ENCODE measurements at regions of chr14 and their contacts with region 1.

Region 1: GRCh38 chr14:20613094-20614037 is 22.2 kb upstream of the RNASE12 start:
- DNase-seq: peak; percentile 91 to 96
- H3K4me3 ChIP-seq: peak overlapping the region; percentile 66
- H3K4me3 Mint-ChIP-seq: no peak overlapping the region
- H3K27ac Mint-ChIP-seq: no peak overlapping the region
- H3K4me1 ChIP-seq: 0 out of 2 replicates have a peak, but pooled peaks cover 4% of the 10 kb centered on the region
- H3K4me1 Mint-ChIP-seq: peaks cover 22% of the 10 kb centered on the region
- H3K27me3 ChIP-seq: no peaks in the 10 kb centered on the region
- H3K27me3 Mint-ChIP-seq: no peaks in the 10 kb centered on the region
- CTCF ChIP-seq: peak; percentile 64 to 83

Region 2: GRCh38 chr14:20327005-20327869 is 286.1 kb before region 1 on chr14:
- CTCF ChIA-PET with region 1: no interaction called
- POLR2A ChIA-PET with region 1: no interaction called
- intact Hi-C with region 1: loop called (anchors 1 kb)
- DNase-seq: peak in 1 of 2 experiments; percentile 62
- H3K4me3 ChIP-seq: no peak overlapping the region
- H3K4me3 Mint-ChIP-seq: no peak overlapping the region
- H3K27ac Mint-ChIP-seq: no peak overlapping the region
- H3K4me1 ChIP-seq: peaks cover 10% of the 10 kb centered on the region; the same call in 1 of the 2 replicates
- H3K4me1 Mint-ChIP-seq: peaks cover 22% of the 10 kb centered on the region
- H3K27me3 ChIP-seq: no peaks in the 10 kb centered on the region
- H3K27me3 Mint-ChIP-seq: no peaks in the 10 kb centered on the region
- CTCF ChIP-seq: peak; percentile 39 to 59

Region 3: DNA sequence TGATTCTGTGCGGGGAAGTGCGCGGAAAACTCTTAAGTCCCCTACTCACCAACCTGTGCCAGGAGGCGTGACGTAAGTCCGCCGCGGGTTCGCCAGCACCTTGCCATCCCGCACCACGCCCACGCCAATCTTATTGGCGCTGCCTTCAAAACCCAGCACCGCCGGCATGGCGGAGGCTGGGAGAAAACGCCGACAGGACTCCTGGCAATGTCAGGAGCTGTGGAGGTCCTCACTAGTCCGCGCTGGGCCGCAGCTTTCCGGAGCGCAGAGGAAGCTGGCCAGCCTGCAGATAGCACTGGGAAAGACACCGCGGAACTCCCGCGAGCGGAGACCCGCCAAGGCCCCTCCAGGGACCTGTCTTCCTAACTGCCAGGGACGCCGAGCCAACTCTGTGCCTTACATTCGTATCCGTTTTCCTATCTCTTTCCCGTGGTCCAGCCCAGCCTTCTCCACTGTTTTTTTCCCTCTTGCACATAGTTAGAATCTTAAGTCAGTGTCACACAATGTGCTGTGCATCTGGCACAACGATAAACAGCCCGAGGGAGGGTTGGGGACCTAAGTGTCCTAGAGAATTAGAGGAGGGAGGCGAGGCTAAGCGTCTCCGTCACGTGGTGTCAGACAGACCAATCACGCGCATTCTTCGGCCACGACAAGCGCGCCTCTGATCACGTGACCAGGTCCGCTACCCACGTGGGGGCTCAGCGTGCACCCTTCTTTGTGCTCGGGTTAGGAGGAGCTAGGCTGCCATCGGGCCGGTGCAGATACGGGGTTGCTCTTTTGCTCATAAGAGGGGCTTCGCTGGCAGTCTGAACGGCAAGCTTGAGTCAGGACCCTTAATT is 158.6 kb before region 1 on chr14 and contains the starts of genes APEX1 and OSGEP:
- CTCF ChIA-PET with region 1: no interaction called
- POLR2A ChIA-PET with region 1: no interaction called
- intact Hi-C with region 1: loop called (anchors 1 kb)
- DNase-seq: peak; percentile 97 to 99
- H3K4me3 ChIP-seq: peak within 1 kb of the TSS; percentile 63
- H3K4me3 Mint-ChIP-seq: no peak within 1 kb of the TSS
- H3K27ac Mint-ChIP-seq: no peak within 1 kb of the TSS
- H3K4me1 ChIP-seq: no peaks in the 10 kb centered on the region
- H3K4me1 Mint-ChIP-seq: peaks cover 1% of the 10 kb centered on the region
- H3K27me3 ChIP-seq: no peaks in the 10 kb centered on the region
- H3K27me3 Mint-ChIP-seq: no peaks in the 10 kb centered on the region
- CTCF ChIP-seq: no peak
- total RNA-seq, gene APEX1: 176 and 185 TPM in 2 replicates
- total RNA-seq, gene OSGEP: 63.1 and 64.3 TPM in 2 replicates

Region 4: GRCh38 chr14:20461274-20462001 is 151.9 kb before region 1 on chr14 and contains the start of gene PIP4P1:
- CTCF ChIA-PET with region 1: no interaction called
- POLR2A ChIA-PET with region 1: interaction called, 8 read pairs
- intact Hi-C with region 1: loop called (anchors 1 kb)
- DNase-seq: peak; percentile 99 to 100
- H3K4me3 ChIP-seq: peak within 1 kb of the TSS; percentile 93
- H3K4me3 Mint-ChIP-seq: peak within 1 kb of the TSS; percentile 83
- H3K27ac Mint-ChIP-seq: peak within 1 kb of the TSS; percentile 96
- H3K4me1 ChIP-seq: peaks cover 16% of the 10 kb centered on the region
- H3K4me1 Mint-ChIP-seq: peaks cover 17% of the 10 kb centered on the region
- H3K27me3 ChIP-seq: no peaks in the 10 kb centered on the region
- H3K27me3 Mint-ChIP-seq: no peaks in the 10 kb centered on the region
- CTCF ChIP-seq: no peak
- total RNA-seq, gene PIP4P1: 39.6 and 46.2 TPM in 2 replicates

Region 5: GRCh38 chr14:20632682-20633428 is 19.5 kb after region 1 on chr14:
- CTCF ChIA-PET with region 1: interaction called, 9 read pairs
- POLR2A ChIA-PET with region 1: interaction called, 5 read pairs
- intact Hi-C with region 1: loop called (anchors 1 kb)
- DNase-seq: peak; percentile 79 to 85
- H3K4me3 ChIP-seq: peak overlapping the region; percentile 38
- H3K4me3 Mint-ChIP-seq: peak overlapping the region; percentile 93
- H3K27ac Mint-ChIP-seq: peak overlapping the region; percentile 92
- H3K4me1 ChIP-seq: peaks cover 3% of the 10 kb centered on the region
- H3K4me1 Mint-ChIP-seq: peaks cover 24% of the 10 kb centered on the region
- H3K27me3 ChIP-seq: no peaks in the 10 kb centered on the region
- H3K27me3 Mint-ChIP-seq: peaks cover 3% of the 10 kb centered on the region
- CTCF ChIP-seq: no peak

Region 6: DNA sequence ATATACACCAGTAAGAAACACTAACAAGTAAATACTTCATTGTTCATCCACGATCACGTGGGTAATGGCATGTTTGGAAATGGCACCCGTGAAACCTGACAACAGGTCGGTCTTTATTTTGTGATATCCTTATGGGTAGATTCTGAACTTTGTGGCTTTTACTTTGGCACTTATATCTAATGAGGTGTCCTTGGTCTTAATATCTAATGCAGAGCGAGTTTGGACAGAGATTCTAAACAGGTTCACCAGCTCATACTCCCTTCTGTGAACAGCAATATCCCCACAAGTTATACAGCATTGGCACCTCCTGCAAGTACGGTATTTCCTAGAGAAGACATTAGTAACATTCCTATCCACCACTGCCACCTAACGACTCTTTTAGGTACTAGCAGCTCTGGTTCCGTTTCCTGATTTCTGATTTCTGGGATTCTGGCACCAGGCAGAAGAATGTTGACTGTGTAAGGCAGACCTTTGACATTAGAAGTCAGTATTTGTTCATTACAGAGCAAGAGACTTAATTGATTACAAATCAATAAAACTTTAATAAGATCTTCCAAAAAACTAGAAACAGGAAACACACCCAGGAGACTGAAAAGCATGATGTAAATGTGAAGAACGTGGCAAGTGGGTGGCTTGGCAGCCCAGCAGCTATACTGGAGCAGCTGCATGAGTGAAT is 77.6 kb after region 1 on chr14:
- CTCF ChIA-PET with region 1: interaction called, 10 read pairs
- POLR2A ChIA-PET with region 1: interaction called, 4 read pairs
- intact Hi-C with region 1: loop called (anchors 1 kb)
- DNase-seq: peak; percentile 49 to 66
- H3K4me3 ChIP-seq: no peak overlapping the region
- H3K4me3 Mint-ChIP-seq: peak overlapping the region; percentile 31
- H3K27ac Mint-ChIP-seq: peak overlapping the region; percentile 55
- H3K4me1 ChIP-seq: peaks cover 33% of the 10 kb centered on the region
- H3K4me1 Mint-ChIP-seq: peaks cover 20% of the 10 kb centered on the region
- H3K27me3 ChIP-seq: no peaks in the 10 kb centered on the region
- H3K27me3 Mint-ChIP-seq: no peaks in the 10 kb centered on the region
- CTCF ChIP-seq: peak; percentile 62 to 75